ENCODE measurements at regions of chr5 and their contacts with region 1.

Region 1: GRCh38 chr5:173123416-173123815 is 20.9 kb upstream of the BNIP1 start:
- DNase-seq: no peak
- ATAC-seq: no peak
- H3K4me3 ChIP-seq: no peak overlapping the region
- H3K27ac ChIP-seq: no peak overlapping the region
- H3K4me1 ChIP-seq: no peaks in the 10 kb centered on the region
- H3K27me3 ChIP-seq: no peaks in the 10 kb centered on the region
- CTCF ChIP-seq: no peak

Region 2: GRCh38 chr5:173065155-173065554 is 58.3 kb before region 1 on chr5:
- intact Hi-C with region 1: loop called in 1 of 10 experiments (anchors 10 kb)
- DNase-seq: no peak
- ATAC-seq: no peak
- H3K4me3 ChIP-seq: no peak overlapping the region
- H3K27ac ChIP-seq: peak overlapping the region in 2 of 10 donors; percentile 6 to 17
- H3K4me1 ChIP-seq: peaks cover 0 to 68% (median 33%) of the 10 kb centered on the region in 9 donors
- H3K27me3 ChIP-seq: no peaks in the 10 kb centered on the region
- CTCF ChIP-seq: no peak

Measured in heart right ventricle (tissue), 16 donors.